ENCODE measurements at regions of chr5 and their contacts with region 1.

Region 1: GRCh38 chr5:10424124-10424731 is 17.5 kb upstream of the ROPN1L start:
- DNase-seq: peak in 5 of 14 experiments; percentile 12 to 48 (median 28)
- ATAC-seq: peak; percentile 38
- H3K4me3 ChIP-seq: no peak overlapping the region
- H3K4me3 Mint-ChIP-seq: no peak overlapping the region
- H3K27ac ChIP-seq: no peak overlapping the region
- H3K27ac Mint-ChIP-seq: peak overlapping the region; percentile 16
- H3K4me1 ChIP-seq: peaks cover 9% of the 10 kb centered on the region
- H3K4me1 Mint-ChIP-seq: peaks cover 43% of the 10 kb centered on the region
- H3K27me3 ChIP-seq: no peaks in the 10 kb centered on the region
- H3K27me3 Mint-ChIP-seq: no peaks in the 10 kb centered on the region
- CTCF ChIP-seq: peak; percentile 20

Region 2: GRCh38 chr5:10283927-10284635 is 140.1 kb before region 1 on chr5:
- CTCF ChIA-PET with region 1: interaction called, 4 read pairs
- POLR2A ChIA-PET with region 1: no interaction called
- intact Hi-C with region 1: loop called (anchors 1 to 5 kb)
- DNase-seq: peak; percentile 56 to 85 (median 72)
- ATAC-seq: peak; percentile 97
- H3K4me3 ChIP-seq: no peak overlapping the region
- H3K4me3 Mint-ChIP-seq: no peak overlapping the region
- H3K27ac ChIP-seq: no peak overlapping the region
- H3K27ac Mint-ChIP-seq: no peak overlapping the region
- H3K4me1 ChIP-seq: peaks cover 14% of the 10 kb centered on the region
- H3K4me1 Mint-ChIP-seq: no peaks in the 10 kb centered on the region
- H3K27me3 ChIP-seq: no peaks in the 10 kb centered on the region
- H3K27me3 Mint-ChIP-seq: no peaks in the 10 kb centered on the region
- CTCF ChIP-seq: peak; percentile 99

Region 3: DNA sequence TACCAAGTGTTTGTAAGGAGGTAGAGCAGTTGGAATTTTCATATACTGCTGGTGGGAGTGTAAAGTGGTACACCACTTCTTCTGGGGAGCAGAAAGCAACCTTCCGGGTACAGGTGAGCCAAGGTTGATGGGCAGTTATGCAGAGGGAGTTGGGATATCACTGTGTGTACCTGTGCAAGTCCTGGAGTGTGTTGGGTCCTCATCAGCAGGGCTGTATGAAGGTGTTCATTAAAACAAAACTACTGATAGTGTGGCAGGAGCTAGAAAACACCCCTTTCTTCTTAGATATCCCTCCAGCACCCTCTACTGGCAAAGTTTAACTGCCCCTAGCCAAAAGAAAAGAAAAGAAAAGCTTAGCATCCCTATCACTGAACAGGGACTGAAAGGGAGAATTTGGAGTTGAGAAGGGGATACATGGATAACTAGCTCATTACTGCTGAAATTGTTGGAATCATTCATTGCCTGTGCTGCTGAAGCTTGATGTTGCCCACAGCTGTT is 60.0 kb before region 1 on chr5:
- CTCF ChIA-PET with region 1: interaction called, 3 read pairs
- POLR2A ChIA-PET with region 1: no interaction called
- intact Hi-C with region 1: loop called in 1 of 2 experiments (anchors 5 kb)
- DNase-seq: peak in 3 of 14 experiments; percentile 30 to 63 (median 57)
- ATAC-seq: peak; percentile 55
- H3K4me3 ChIP-seq: no peak overlapping the region
- H3K4me3 Mint-ChIP-seq: peak overlapping the region; percentile 31
- H3K27ac ChIP-seq: no peak overlapping the region
- H3K27ac Mint-ChIP-seq: no peak overlapping the region
- H3K4me1 ChIP-seq: peaks cover 34% of the 10 kb centered on the region
- H3K4me1 Mint-ChIP-seq: peaks cover 80% of the 10 kb centered on the region
- H3K27me3 ChIP-seq: no peaks in the 10 kb centered on the region
- H3K27me3 Mint-ChIP-seq: no peaks in the 10 kb centered on the region
- CTCF ChIP-seq: no peak

Measured in CD4-positive, alpha-beta T cell (primary cell).